ENCODE measurements at regions of chr1 and their contacts with region 1.

Region 1: GRCh38 chr1:21176586-21177555 is at the start of gene EIF4G3:
- DNase-seq: peak; percentile 79
- H3K4me3 ChIP-seq: peak within 1 kb of the TSS; percentile 88
- H3K27me3 ChIP-seq: no peaks in the 10 kb centered on the region
- CTCF ChIP-seq: no peak
- polyA plus RNA-seq, gene EIF4G3: 62.0 and 62.2 TPM in 2 replicates

Region 2: DNA sequence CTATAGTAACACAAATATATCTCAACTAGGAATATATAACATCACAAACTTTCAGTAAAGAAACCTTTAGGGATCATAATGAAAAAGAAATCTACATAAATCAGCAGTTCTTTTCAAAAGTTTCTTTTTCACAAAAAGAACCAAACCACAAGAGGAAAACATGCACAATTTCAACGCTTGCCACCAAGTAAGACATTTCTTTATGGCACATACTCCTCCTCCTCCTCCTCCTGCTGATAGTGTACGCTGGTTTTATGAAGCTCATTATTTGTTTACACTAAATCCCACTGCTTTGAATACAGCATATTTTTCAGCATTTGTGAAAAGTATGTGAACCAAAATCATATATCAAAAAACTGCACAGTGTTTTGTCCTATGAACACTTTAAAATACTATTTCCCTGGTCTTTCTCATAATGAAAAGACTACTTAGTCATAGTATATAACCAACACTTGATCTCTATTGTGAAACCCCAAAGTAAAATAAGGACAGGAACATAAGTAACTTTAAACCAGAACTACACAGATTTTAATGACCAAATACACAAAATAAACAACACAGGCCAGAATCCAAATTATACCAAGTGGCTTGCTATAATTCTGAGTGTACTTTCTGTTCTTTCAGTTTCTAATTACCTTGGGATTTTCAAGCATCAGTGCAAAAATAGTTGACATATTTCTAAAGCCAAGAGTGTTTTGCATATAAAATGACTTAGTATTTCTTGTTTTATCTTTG is 184.4 kb before region 1 on chr1:
- CTCF ChIA-PET with region 1: no interaction called
- POLR2A ChIA-PET with region 1: no interaction called
- DNase-seq: no peak
- H3K4me3 ChIP-seq: no peak overlapping the region
- H3K27me3 ChIP-seq: no peaks in the 10 kb centered on the region
- CTCF ChIP-seq: no peak

Region 3: DNA sequence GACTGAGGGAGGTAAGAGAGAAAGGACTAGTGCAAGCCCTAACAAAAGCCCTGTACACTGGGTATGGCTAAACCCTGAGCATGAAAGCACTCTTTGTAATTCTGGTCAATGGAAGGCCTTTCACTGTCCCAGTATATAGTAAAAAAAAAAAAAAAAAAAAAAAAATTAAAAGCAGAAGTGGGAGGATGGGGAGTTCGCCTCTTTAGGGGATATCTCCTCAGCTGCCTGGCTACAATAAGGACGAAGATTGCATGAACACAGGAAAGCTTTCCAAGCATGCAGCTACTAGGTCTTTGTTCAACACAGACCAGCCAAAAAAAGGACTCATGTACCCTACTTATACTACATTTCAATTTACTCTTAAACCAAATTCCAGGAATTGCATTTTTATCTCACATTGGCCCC is 59.3 kb before region 1 on chr1:
- CTCF ChIA-PET with region 1: no interaction called
- POLR2A ChIA-PET with region 1: interaction called, 22 read pairs
- DNase-seq: no peak
- H3K4me3 ChIP-seq: no peak overlapping the region
- H3K27me3 ChIP-seq: no peaks in the 10 kb centered on the region
- CTCF ChIP-seq: no peak

Region 4: GRCh38 chr1:21156019-21156418 is 20.9 kb before region 1 on chr1:
- CTCF ChIA-PET with region 1: no interaction called
- POLR2A ChIA-PET with region 1: interaction called, 21 read pairs
- DNase-seq: no peak
- H3K4me3 ChIP-seq: no peak overlapping the region
- H3K27me3 ChIP-seq: no peaks in the 10 kb centered on the region
- CTCF ChIP-seq: no peak

Region 5: GRCh38 chr1:21255278-21255942 is 78.5 kb after region 1 on chr1:
- CTCF ChIA-PET with region 1: no interaction called
- POLR2A ChIA-PET with region 1: no interaction called
- DNase-seq: no peak
- H3K4me3 ChIP-seq: no peak overlapping the region
- H3K27me3 ChIP-seq: no peaks in the 10 kb centered on the region
- CTCF ChIP-seq: peak; percentile 87